AG04450 (cell line): ENCODE measurements at regions of chr7 and their contacts with region 1.

Region 1: DNA sequence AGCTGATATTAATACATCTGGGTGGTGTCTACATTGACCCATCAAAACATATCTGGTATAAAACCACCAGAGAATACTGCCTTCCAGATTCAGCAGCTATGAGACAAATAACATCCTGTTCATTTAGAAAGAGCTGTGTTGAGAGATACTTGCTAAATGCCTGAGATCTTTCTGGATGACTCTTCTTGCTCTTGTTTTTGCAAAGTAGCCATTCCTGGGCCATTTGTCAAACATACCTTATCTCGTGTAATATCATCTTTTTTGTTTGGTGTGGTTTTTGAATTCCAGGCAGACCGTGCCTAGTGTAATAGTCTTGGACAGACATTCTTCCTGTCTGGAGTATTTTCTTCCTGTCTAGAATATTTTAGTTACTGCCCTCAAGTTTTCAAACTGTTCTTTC is 74.7 kb upstream of the PRR15 start:
- DNase-seq: no peak
- H3K4me3 ChIP-seq: no peak overlapping the region
- H3K27ac ChIP-seq: no peak overlapping the region
- H3K27me3 ChIP-seq: no peaks in the 10 kb centered on the region
- CTCF ChIP-seq: no peak

Region 2: DNA sequence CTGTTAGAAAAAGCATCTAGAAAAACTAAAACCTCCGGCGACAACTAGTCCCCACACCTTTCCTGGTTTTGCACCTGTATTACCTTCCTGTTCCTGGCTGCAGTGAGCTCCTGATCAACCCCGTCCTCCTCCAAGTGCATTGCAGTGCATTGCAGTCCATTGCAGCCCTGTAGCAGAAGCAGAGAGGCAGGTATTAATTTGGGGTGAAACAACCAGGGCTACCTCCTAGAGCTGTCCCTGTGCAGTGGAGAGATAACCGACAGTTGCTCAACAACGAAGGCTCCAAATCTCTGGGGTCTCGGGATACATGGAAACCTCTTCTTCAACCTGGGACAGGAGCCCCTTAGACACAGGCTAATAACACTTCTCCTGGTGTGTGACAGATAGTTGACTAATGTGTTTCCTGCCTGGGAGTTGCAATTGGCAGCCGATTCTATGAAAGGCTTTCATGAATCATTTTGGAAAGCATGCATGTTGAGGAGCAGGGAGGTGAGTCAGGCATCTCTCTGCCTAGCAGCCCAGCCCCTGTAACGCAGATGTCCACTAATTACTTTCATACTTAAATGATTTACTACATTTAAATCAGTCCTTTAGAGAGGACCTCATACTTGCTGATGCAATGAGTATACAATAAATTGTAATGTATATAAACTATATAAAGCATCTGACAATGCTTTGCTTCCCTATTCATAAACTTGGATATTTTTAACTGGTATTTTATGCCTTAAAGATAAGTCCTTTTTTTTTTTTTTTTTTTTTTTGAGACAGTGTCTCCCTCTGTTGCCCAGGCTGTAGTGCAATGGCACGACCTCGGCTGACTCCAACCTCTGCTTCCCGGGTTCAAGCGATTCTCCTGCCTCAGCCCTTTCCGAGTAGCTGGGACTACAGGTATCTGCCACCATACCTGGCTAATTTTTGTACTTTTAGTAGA is 133.6 kb after region 1 on chr7:
- CTCF ChIA-PET with region 1: interaction called, 11 read pairs
- POLR2A ChIA-PET with region 1: no interaction called
- DNase-seq: peak; percentile 63
- H3K4me3 ChIP-seq: no peak overlapping the region
- H3K27ac ChIP-seq: peak overlapping the region; percentile 22
- H3K27me3 ChIP-seq: peaks cover 5% of the 10 kb centered on the region
- CTCF ChIP-seq: no peak